ENCODE measurements at regions of chr3 and their contacts with region 1.

Region 1: GRCh38 chr3:185308126-185308754 is 54.4 kb upstream of the EHHADH start:
- DNase-seq: peak; percentile 77
- ATAC-seq: peak; percentile 49
- H3K4me3 ChIP-seq: no peak overlapping the region
- H3K4me3 Mint-ChIP-seq: no peak overlapping the region
- H3K27ac ChIP-seq: no peak overlapping the region
- H3K27ac Mint-ChIP-seq: no peak overlapping the region
- H3K4me1 ChIP-seq: no peaks in the 10 kb centered on the region
- H3K4me1 Mint-ChIP-seq: no peaks in the 10 kb centered on the region
- H3K27me3 ChIP-seq: no peaks in the 10 kb centered on the region
- H3K27me3 Mint-ChIP-seq: no peaks in the 10 kb centered on the region
- CTCF ChIP-seq: peak; percentile 82

Region 2: GRCh38 chr3:185176750-185177359 is 131.4 kb before region 1 on chr3:
- CTCF ChIA-PET with region 1: interaction called, 4 read pairs
- POLR2A ChIA-PET with region 1: no interaction called
- intact Hi-C with region 1: loop called (anchors 10 kb)
- DNase-seq: peak; percentile 47
- ATAC-seq: no peak
- H3K4me3 ChIP-seq: no peak overlapping the region
- H3K4me3 Mint-ChIP-seq: no peak overlapping the region
- H3K27ac ChIP-seq: no peak overlapping the region
- H3K27ac Mint-ChIP-seq: no peak overlapping the region
- H3K4me1 ChIP-seq: peaks cover 8 to 10% of the 10 kb centered on the region in 2 donors
- H3K4me1 Mint-ChIP-seq: peaks cover 13% of the 10 kb centered on the region
- H3K27me3 ChIP-seq: peaks cover 0 to 7% (median 2%) of the 10 kb centered on the region in 4 experiments
- H3K27me3 Mint-ChIP-seq: no peaks in the 10 kb centered on the region
- CTCF ChIP-seq: peak; percentile 89

Region 3: DNA sequence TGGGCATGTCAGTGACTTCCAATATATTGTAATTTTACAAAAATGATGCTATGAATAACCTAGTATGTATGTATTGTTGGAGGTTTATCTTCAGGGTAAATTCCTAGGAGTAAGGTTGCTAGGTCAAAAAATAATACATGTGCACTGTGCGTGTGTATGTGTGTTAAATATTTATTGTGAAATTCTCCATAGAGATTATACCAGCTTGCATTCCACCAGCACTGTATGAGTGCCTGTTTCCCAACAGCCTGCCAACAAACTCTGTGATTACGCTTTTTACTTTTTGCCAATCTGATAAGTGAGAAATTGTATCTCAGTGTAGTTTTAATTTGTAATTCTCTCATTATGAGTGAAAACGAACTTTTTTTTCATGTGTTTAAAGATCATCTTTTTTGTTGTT is 529.2 kb after region 1 on chr3:
- CTCF ChIA-PET with region 1: no interaction called
- POLR2A ChIA-PET with region 1: no interaction called
- intact Hi-C with region 1: no loop called
- DNase-seq: no peak
- ATAC-seq: no peak
- H3K4me3 ChIP-seq: no peak overlapping the region
- H3K4me3 Mint-ChIP-seq: no peak overlapping the region
- H3K27ac ChIP-seq: no peak overlapping the region
- H3K27ac Mint-ChIP-seq: no peak overlapping the region
- H3K4me1 ChIP-seq: no peaks in the 10 kb centered on the region
- H3K4me1 Mint-ChIP-seq: no peaks in the 10 kb centered on the region
- H3K27me3 ChIP-seq: peaks cover 0 to 6% (median 0%) of the 10 kb centered on the region in 4 experiments
- H3K27me3 Mint-ChIP-seq: peaks cover 31% of the 10 kb centered on the region
- CTCF ChIP-seq: no peak

Measured in B cell (primary cell).